GM12878 (cell line): ENCODE measurements at regions of chr2 and their contacts with region 1.

Region 1: DNA sequence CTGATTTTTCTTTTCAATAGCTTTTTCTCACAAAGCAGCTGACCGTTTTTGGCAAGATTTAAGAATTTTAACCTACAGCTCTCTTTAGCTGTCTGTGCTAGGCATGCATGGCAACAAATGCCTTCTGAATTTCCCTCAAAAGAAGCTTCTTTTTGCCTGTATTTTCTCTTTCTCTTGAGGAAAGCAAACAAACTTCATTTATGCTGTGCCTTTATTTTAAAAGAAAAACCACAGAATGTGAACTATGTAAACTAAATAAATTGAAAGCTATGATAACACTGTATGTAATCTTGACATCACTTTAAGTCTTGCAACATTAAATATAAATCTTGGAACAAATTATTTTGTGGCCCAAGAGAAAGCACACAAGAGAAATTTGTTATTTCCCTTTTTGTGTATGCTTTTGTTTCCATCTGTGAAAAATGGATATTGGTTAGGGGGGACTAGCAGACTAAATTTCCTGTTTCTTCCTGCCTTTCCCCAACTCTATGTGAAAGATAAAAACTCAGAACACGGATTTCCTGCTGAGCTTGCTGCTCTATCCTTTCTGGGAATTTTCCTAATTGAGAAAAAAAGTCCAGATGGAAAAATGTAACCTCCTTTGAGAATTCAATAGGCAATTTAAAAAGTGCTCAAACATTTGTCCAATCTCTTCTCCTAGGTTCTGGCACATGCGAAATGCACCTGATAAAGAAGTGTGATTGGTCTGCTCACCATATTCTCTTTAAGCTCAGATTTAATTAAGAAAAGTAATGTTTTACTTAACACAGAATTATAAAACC is 20.9 kb upstream of the TFPI start:
- DNase-seq: no peak
- ATAC-seq: no peak
- H3K4me3 ChIP-seq: no peak overlapping the region
- H3K27ac ChIP-seq: no peak overlapping the region
- H3K4me1 ChIP-seq: no peaks in the 10 kb centered on the region
- H3K27me3 ChIP-seq: no peaks in the 10 kb centered on the region
- CTCF ChIP-seq: no peak
- EP300 ChIP-seq: no peak
- POLR2A ChIP-seq: no peak
- RAD21 ChIP-seq: no peak

Region 2: DNA sequence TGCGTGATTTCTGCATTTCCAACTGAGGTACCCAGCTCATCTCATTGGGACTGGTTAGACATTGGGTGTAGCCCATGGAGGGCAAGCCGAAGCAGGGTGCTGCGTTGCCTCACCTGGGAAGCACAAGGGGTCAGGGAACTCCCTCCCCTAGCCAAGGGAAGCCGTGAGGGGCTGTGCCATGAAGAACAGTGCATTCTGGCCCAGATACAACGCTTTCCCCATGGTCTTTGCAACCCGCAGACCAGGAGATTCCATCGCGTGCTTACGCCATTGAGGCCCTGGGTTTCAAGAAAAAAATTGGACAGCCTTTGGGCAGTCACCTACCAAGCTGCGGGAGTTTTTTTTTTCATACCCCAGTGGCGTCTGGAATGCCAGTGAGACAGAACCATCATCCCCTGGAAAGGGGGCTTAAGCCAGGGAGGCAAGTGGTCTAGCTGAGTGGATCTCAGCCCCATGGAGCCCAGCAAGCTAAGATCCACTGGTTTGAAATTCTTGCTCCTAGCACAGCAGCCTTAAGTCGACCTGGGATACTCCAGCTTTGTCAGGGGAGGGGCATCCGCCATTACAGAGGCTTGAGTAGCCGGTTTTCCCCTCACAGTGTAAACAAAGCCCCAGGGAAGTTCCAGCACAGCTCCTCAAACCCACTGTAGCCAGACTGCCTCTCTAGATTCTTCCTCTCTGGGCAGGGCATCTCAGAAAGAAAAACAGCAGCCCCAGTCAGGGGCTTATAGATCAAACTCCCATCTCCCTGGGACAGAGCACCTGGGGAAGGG is 42.6 kb before region 1 on chr2:
- CTCF ChIA-PET with region 1: interaction called, 13 read pairs
- POLR2A ChIA-PET with region 1: no interaction called
- RAD21 ChIA-PET with region 1: no interaction called
- SMC1A ChIA-PET with region 1: interaction called, 3 read pairs
- in situ Hi-C with region 1: no loop called
- intact Hi-C with region 1: loop called (anchors 2 kb)
- DNase-seq: no peak
- ATAC-seq: peak; percentile 81
- H3K4me3 ChIP-seq: no peak overlapping the region
- H3K27ac ChIP-seq: no peak overlapping the region
- H3K4me1 ChIP-seq: no peaks in the 10 kb centered on the region
- H3K27me3 ChIP-seq: no peaks in the 10 kb centered on the region; a peak in 1 of 4 replicates
- CTCF ChIP-seq: no peak
- EP300 ChIP-seq: no peak
- POLR2A ChIP-seq: no peak
- RAD21 ChIP-seq: no peak

Region 3: GRCh38 chr2:188450732-188451483 is 875.7 kb after region 1 on chr2:
- CTCF ChIA-PET with region 1: no interaction called
- POLR2A ChIA-PET with region 1: no interaction called
- RAD21 ChIA-PET with region 1: no interaction called
- SMC1A ChIA-PET with region 1: no interaction called
- in situ Hi-C with region 1: no loop called
- intact Hi-C with region 1: no loop called
- DNase-seq: no peak
- ATAC-seq: no peak
- H3K4me3 ChIP-seq: no peak overlapping the region
- H3K27ac ChIP-seq: no peak overlapping the region
- H3K4me1 ChIP-seq: no peaks in the 10 kb centered on the region
- H3K27me3 ChIP-seq: no peaks in the 10 kb centered on the region
- CTCF ChIP-seq: no peak
- EP300 ChIP-seq: no peak
- POLR2A ChIP-seq: no peak
- RAD21 ChIP-seq: no peak